T-cell (primary cell): ENCODE measurements at regions of chr18 and their contacts with region 1.

Region 1: GRCh38 chr18:21682371-21683051 is 22.1 kb downstream of the ABHD3 start:
- DNase-seq: peak in 24 of 35 experiments; percentile 2 to 73 (median 10)
- ATAC-seq: peak; percentile 81 to 90 (median 87)
- H3K4me3 ChIP-seq: peak overlapping the region; percentile 33 to 50
- H3K4me3 Mint-ChIP-seq: no peak overlapping the region
- H3K27ac ChIP-seq: peak overlapping the region; percentile 84
- H3K27ac Mint-ChIP-seq: no peak overlapping the region
- H3K4me1 ChIP-seq: peaks cover 0 to 12% of the 10 kb centered on the region in 2 experiments
- H3K4me1 Mint-ChIP-seq: peaks cover 17 to 24% (median 24%) of the 10 kb centered on the region in 3 donors
- H3K27me3 ChIP-seq: no peaks in the 10 kb centered on the region
- H3K27me3 Mint-ChIP-seq: no peaks in the 10 kb centered on the region

Region 2: GRCh38 chr18:21600526-21601410 is 81.7 kb before region 1 on chr18 and contains the start of gene ESCO1:
- CTCF ChIA-PET with region 1: interaction called, 3 to 16 read pairs
- POLR2A ChIA-PET with region 1: interaction called, 6 to 12 read pairs
- DNase-seq: peak; percentile 85 to 98 (median 93)
- ATAC-seq: peak; percentile 88 to 91 (median 88)
- H3K4me3 ChIP-seq: peak within 1 kb of the TSS; percentile 74 to 84
- H3K4me3 Mint-ChIP-seq: peak within 1 kb of the TSS; percentile 93 to 96 (median 95)
- H3K27ac ChIP-seq: peak within 1 kb of the TSS; percentile 90
- H3K27ac Mint-ChIP-seq: peak within 1 kb of the TSS; percentile 99
- H3K4me1 ChIP-seq: peaks cover 15 to 31% of the 10 kb centered on the region in 2 experiments
- H3K4me1 Mint-ChIP-seq: peaks cover 38 to 51% (median 42%) of the 10 kb centered on the region in 3 donors
- H3K27me3 ChIP-seq: no peaks in the 10 kb centered on the region
- H3K27me3 Mint-ChIP-seq: no peaks in the 10 kb centered on the region
- total RNA-seq, gene ESCO1: 24.5 to 32.6 (median 26.2) TPM

Region 3: DNA sequence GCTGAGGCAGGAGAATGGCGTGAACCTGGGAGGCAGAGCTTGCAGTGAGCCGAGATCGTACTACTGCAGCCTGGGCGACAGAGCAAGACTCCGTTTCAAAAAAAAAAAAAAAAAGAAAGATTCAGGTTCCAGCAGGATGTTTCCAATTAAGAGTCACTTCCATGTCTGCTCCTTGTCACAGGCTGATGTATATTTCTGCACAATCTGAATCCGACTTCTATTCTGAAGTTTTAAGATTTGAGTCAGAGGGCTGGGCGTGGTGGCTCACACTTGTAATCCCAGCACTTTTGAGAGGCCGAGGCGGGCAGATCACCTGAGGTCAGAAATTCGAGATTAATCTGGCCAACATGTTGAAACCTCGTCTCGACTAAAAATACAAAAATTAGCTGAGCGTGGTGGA is 45.7 kb before region 1 on chr18:
- CTCF ChIA-PET with region 1: no interaction called
- POLR2A ChIA-PET with region 1: interaction called, 8 to 14 read pairs
- DNase-seq: no peak
- ATAC-seq: no peak
- H3K4me3 ChIP-seq: no peak overlapping the region
- H3K4me3 Mint-ChIP-seq: no peak overlapping the region
- H3K27ac ChIP-seq: no peak overlapping the region
- H3K27ac Mint-ChIP-seq: no peak overlapping the region
- H3K4me1 ChIP-seq: no peaks in the 10 kb centered on the region
- H3K4me1 Mint-ChIP-seq: peaks cover 0 to 2% (median 1%) of the 10 kb centered on the region in 3 donors
- H3K27me3 ChIP-seq: no peaks in the 10 kb centered on the region
- H3K27me3 Mint-ChIP-seq: no peaks in the 10 kb centered on the region

Region 4: DNA sequence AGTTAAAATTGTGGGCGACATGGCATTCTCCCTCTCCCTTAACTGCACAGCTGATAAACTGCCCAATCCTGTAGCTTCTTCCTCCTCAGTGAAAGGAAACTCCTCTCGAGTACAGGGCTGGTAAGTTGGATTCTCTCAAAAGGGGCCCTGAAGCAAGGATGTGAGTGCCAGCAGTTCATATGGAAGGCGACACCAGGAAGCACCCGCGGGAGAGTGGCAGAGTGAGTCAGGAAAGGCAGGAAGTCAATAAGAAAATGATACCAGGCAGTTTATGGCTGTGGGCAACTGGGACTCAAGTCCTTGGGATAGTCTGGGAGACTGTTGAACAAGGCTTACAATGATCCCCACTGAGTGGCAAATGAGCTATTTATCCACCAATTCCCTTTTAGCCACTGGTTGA is 12.8 kb before region 1 on chr18:
- CTCF ChIA-PET with region 1: no interaction called
- POLR2A ChIA-PET with region 1: no interaction called
- DNase-seq: no peak
- ATAC-seq: no peak
- H3K4me3 ChIP-seq: no peak overlapping the region
- H3K4me3 Mint-ChIP-seq: no peak overlapping the region
- H3K27ac ChIP-seq: no peak overlapping the region
- H3K27ac Mint-ChIP-seq: no peak overlapping the region
- H3K4me1 ChIP-seq: no peaks in the 10 kb centered on the region
- H3K4me1 Mint-ChIP-seq: no peaks in the 10 kb centered on the region
- H3K27me3 ChIP-seq: no peaks in the 10 kb centered on the region
- H3K27me3 Mint-ChIP-seq: no peaks in the 10 kb centered on the region